Activated CD4-positive, alpha-beta T cell treated with anti-CD3 and anti-CD28 coated beads, Interleukin-2, amount 10 ng/mL, durations not matched to agents 24 days and 14 days (primary cell): ENCODE measurements at regions of chr15 and their contacts with region 1.

Region 1: DNA sequence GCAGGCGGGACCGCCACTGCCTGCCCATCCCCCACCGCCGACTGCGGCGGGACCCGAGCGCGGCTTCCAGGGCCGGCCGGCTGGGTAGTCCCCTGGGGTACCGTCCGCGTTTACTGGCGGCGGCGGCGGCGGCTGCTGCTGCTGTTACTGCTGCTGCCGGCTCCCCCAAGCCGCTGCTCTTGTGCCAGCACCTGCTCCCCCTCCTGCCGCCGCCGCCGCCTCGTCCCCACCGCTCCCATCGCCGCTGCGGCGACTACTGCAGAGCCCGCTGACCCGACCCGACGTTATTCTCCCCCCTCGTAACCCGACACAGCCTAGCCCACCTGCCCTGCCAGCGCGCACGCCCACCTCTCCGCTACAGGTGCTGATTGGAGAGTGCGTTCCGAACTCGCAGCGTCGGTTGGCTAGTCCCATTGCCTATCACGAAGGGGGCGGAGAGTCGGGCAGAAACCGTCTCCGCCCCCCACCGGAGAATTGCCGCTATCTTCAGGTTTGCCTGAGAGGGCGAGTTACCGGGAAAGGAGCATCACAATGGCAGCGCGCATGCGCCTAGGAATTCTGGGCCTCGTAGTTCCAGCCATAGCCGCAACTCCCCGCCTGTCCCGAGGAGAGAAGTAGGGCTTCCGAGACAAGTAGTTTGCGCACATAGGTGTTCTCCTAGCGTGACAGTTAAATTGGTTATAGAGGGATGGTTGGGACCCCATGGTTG is at the start of gene TTBK2:
- DNase-seq: peak; percentile 99
- H3K4me3 Mint-ChIP-seq: peak within 1 kb of the TSS; percentile 99
- H3K27ac Mint-ChIP-seq: peak within 1 kb of the TSS; percentile 94
- H3K4me1 Mint-ChIP-seq: peaks cover 26% of the 10 kb centered on the region
- H3K27me3 Mint-ChIP-seq: no peaks in the 10 kb centered on the region
- total RNA-seq, gene TTBK2: 10.2 and 11.3 TPM in 2 replicates

Region 2: DNA sequence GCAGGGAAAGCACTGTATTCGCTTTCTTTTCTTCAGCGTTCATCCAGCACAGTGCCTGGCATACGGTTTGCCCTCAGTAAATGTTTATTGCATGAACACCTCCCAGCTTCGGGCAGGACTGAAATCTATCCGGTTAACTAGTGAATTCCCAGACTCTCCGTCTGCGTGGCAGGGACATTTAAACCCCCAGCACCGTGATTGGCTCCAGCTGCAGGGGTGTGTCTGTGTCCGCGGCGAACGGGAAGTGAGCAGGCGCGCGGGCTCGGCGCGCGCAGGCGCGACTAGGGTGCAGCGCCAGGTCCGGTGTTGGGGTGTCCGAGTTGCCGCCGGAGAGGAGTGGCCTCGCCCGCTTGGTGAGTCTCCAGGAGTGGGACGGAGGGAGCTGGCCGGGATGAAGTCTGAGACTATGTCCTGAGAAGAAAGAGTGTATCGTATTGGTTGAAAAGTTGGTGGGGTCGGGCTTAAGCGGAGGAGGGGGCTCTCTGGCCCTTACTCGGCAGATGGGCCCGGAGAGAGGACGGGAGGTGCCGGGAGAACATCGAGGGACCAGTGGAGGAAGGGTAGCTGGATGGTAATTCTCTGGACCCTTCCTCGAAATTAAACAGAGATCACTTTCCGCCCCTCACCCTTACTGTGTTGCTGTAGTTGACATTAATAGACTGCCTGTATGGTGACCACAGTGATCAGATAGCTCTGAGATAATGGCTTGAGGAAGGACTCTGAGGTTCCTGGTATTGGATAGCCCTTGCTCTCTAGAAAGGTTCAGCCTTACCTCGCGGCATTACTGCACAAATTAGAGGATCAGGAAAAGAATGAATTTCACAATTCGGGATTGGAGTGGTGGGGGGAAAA is 425.1 kb before region 1 on chr15 and contains the start of gene SNAP23:
- intact Hi-C with region 1: loop called (anchors 10 kb)
- DNase-seq: peak; percentile 96
- H3K4me3 Mint-ChIP-seq: peak within 1 kb of the TSS; percentile 97
- H3K27ac Mint-ChIP-seq: peak within 1 kb of the TSS; percentile 95
- H3K4me1 Mint-ChIP-seq: peaks cover 62% of the 10 kb centered on the region
- H3K27me3 Mint-ChIP-seq: no peaks in the 10 kb centered on the region
- total RNA-seq, gene SNAP23: 74.0 and 84.5 TPM in 2 replicates

Region 3: DNA sequence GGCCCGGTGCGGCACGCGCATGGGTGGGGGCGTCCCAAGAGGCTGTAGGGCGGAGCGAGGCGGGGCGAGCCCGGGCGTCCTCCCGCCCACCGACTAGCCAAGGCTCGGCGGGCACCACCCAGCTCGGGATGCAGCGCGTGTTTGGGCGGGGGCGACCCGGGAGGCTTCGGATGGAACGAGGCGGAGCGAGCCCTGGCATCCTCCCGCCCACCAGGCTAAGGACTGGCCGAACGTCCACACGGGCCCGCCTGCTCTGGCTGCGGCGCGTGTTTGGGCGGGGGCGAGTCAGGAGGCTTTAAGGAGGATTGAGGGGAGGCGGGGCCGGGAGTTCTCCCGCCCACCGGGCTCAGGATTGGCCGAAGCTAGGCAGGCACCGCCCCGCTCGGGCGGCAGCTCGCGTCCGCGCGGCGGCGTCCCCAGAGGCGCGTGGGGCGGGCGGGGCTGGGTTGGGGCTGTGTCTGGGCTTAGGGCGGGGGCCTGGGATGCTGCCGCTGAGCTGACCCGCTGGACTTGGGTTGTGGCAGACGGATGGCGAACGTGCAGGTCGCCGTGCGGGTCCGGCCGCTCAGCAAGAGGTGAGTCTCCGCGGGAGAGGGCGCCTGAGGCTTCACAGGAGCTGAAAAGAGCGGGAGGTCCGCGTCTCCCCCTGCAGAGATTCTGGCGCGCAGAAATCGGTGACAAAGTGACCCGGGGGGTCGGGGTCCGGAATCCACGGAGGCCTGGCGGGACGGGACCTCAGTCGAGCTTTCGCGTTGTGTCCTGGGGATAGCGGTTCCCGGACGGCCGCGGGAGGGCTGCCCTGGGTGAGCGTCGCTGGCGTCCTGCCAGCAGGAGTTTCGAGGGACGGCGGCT is 345.3 kb before region 1 on chr15 and contains the start of gene STARD9:
- intact Hi-C with region 1: loop called (anchors 10 kb)
- DNase-seq: peak; percentile 99
- H3K4me3 Mint-ChIP-seq: peak within 1 kb of the TSS; percentile 93
- H3K27ac Mint-ChIP-seq: peak within 1 kb of the TSS; percentile 82
- H3K4me1 Mint-ChIP-seq: peaks cover 26% of the 10 kb centered on the region
- H3K27me3 Mint-ChIP-seq: peaks cover 25% of the 10 kb centered on the region
- total RNA-seq, gene STARD9: 7.2 and 8.8 TPM in 2 replicates

Region 4: GRCh38 chr15:42736793-42737528 is 183.7 kb before region 1 on chr15 and contains the start of gene CDAN1:
- intact Hi-C with region 1: loop called (anchors 1 kb)
- DNase-seq: peak; percentile 97
- H3K4me3 Mint-ChIP-seq: peak within 1 kb of the TSS; percentile 83
- H3K27ac Mint-ChIP-seq: peak within 1 kb of the TSS; percentile 78
- H3K4me1 Mint-ChIP-seq: peaks cover 9% of the 10 kb centered on the region
- H3K27me3 Mint-ChIP-seq: no peaks in the 10 kb centered on the region
- total RNA-seq, gene CDAN1: 22.9 and 29.7 TPM in 2 replicates

Region 5: DNA sequence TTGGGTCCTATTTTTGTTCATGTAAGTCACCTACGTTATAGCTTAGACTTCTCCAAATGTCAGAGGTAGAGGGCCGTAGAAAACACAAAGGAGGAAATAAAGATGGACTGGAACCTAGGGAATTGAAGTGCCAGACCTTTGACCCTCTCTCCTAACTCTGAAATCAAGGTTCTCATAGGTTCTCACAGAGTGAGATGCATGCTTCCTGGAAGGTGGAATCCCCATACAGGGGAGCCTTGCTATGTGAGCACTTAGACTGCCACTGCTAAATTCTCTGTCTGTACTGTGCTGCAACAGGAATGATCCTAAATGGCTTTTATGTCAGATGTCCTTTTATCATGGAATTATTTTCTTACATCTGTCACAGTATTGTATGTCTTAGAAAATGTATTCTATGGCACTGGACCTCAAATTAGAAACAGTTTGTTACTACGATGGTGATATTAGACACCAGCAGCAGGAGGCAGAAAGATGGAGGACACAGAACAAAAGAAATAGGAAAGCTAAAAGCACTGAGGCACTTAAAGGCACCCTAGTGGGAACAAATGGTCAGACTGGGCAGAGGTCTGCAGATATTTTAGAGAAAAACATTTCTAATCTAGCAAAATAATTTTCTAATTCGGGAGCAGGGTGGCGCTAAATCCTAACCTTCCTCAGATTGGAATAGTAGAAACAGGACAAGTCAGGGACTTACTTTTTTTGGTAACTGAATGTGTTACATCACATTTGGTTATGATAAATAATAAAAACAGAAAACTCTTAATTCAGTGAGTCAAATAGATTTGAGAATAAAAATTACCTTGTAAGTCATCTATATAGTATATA is 123.5 kb before region 1 on chr15:
- intact Hi-C with region 1: loop called (anchors 10 kb)
- DNase-seq: no peak
- H3K4me3 Mint-ChIP-seq: no peak overlapping the region
- H3K27ac Mint-ChIP-seq: no peak overlapping the region
- H3K4me1 Mint-ChIP-seq: peaks cover 9% of the 10 kb centered on the region
- H3K27me3 Mint-ChIP-seq: no peaks in the 10 kb centered on the region

Region 6: DNA sequence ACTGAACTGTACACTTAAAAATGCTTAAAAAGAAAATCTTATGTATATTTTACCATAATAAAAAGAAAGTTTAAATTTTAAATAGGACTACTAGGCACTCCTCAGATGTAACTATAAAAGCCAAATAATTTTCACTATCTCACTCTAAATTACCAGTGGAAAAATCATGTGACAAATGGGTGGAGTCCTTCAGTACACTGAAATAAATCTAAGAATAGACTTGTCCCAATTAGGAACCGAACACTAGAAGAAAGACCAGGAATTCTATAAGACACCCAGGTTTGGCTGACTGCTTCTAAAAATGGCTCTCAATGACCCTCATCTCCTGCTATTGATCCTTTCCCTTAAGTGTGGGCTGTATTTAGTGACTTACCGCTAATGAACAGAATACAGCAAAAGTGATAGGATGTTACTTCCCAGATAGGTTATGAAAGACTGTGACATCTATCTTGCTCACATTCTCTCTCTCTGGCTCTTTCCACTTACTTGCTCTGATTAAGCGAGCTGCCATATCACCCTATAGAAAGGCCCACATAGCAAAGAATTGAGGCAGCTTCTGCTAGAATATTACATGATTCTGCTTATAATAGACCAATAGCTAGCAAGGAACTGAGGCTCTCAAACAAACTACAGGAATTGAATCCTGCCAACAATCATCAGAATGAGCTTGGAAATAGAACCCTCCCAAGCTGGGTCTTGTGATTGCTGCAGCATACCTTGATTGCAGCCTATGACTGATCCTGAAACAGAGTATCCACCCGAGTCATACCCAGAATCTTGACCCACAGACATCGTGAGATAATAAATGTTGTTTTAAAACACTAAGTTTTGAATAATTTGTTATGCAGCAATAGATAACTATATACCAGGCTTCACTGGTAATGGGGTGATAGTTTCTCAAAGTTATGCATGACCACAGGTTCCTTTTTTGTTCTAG is 17.0 kb before region 1 on chr15:
- intact Hi-C with region 1: no loop called
- DNase-seq: no peak
- H3K4me3 Mint-ChIP-seq: no peak overlapping the region
- H3K27ac Mint-ChIP-seq: no peak overlapping the region
- H3K4me1 Mint-ChIP-seq: no peaks in the 10 kb centered on the region
- H3K27me3 Mint-ChIP-seq: no peaks in the 10 kb centered on the region